K562 (cell line): ENCODE measurements at regions of chr5 and their contacts with region 1.

Region 1: GRCh38 chr5:172800088-172800551 is 29.1 kb upstream of the DUSP1 start:
- DNase-seq: no peak
- ATAC-seq: peak; percentile 19; the same call in 2 of the 3 replicates
- H3K4me3 ChIP-seq: no peak overlapping the region
- H3K27ac ChIP-seq: peak overlapping the region; percentile 47; the same call in 2 of the 3 replicates
- H3K4me1 ChIP-seq: peaks cover 41 to 46% of the 10 kb centered on the region in 2 experiments; a peak in 4 of 5 replicates
- H3K27me3 ChIP-seq: no peaks in the 10 kb centered on the region
- CTCF ChIP-seq: no peak
- EP300 ChIP-seq: no peak
- POLR2A ChIP-seq: no peak
- RAD21 ChIP-seq: no peak

Region 2: GRCh38 chr5:172788771-172789686 is 11.1 kb before region 1 on chr5:
- CTCF ChIA-PET with region 1: no interaction called
- POLR2A ChIA-PET with region 1: interaction called, 14 read pairs
- in situ Hi-C with region 1: no loop called
- intact Hi-C with region 1: no loop called
- DNase-seq: peak; percentile 84 to 95 (median 88)
- ATAC-seq: peak; percentile 97
- H3K4me3 ChIP-seq: peak overlapping the region; percentile 17
- H3K27ac ChIP-seq: peak overlapping the region; percentile 98
- H3K4me1 ChIP-seq: peaks cover 36 to 40% of the 10 kb centered on the region in 2 experiments
- H3K27me3 ChIP-seq: no peaks in the 10 kb centered on the region
- CTCF ChIP-seq: no peak; a peak in 1 of 6 replicates
- EP300 ChIP-seq: peak; percentile 46; the same call in 1 of the 2 replicates
- POLR2A ChIP-seq: peak; percentile 74
- RAD21 ChIP-seq: peak; percentile 14 to 18; a peak in 3 of 4 replicates

Region 3: DNA sequence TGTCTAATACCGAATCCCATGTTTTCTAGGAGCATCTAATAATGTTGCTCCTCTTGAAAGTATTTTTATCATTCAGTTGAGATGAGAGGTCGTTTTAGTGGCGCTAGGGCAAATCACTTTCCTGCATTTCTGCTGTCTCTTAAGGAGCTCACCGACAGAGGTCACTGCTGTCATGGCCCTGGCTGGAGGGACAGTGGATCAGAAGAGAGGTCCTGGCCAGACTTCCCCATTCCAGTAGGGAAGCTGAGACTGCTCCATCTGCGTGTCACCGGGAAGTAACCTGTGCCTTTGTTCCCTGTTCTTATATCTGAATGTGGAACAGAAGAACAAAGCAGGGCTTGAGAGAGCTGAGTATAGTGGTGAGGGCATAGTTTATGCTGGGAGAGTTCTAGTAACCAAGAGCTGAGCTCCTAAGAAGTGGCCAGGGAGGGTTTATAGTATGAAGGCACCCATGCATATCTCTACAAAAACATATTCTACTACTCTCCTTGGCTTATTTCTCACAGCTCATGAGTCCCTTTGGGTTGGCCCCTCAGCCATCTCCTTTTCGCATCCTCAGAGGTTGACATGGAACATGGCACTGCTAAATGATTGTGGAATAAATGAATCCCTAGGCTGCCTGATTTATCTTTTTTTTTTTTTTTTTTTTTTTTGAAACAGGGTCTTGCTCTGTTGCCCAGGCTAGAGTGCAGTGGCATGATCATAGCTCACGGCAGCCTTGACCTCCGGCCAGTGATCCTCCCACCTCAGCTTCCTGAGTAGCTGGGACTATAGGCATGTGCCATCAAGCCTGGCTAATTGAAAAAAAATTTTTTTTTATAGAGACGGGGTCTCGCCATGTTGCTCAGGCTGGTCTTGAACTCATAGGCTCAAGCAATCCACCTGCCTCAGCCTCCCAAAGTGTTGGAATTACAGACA is 210.7 kb after region 1 on chr5:
- CTCF ChIA-PET with region 1: no interaction called
- POLR2A ChIA-PET with region 1: no interaction called
- in situ Hi-C with region 1: no loop called
- intact Hi-C with region 1: no loop called
- DNase-seq: peak in 2 of 4 experiments; percentile 28 to 33
- ATAC-seq: peak; percentile 75
- H3K4me3 ChIP-seq: no peak overlapping the region
- H3K27ac ChIP-seq: no peak overlapping the region
- H3K4me1 ChIP-seq: peaks cover 9 to 10% of the 10 kb centered on the region in 2 experiments; a peak in 4 of 5 replicates
- H3K27me3 ChIP-seq: no peaks in the 10 kb centered on the region
- CTCF ChIP-seq: peak; percentile 46 to 62 (median 56)
- EP300 ChIP-seq: no peak
- POLR2A ChIP-seq: no peak
- RAD21 ChIP-seq: peak; percentile 19 to 61; a peak in 2 of 4 replicates